PC-9 (cell line): ENCODE measurements at regions of chr20 and their contacts with region 1.

Region 1: GRCh38 chr20:43749734-43750294 is 23.0 kb upstream of the GTSF1L start:
- DNase-seq: peak in 1 of 2 experiments; percentile 87
- H3K4me3 ChIP-seq: peak overlapping the region; percentile 13; the same call in 1 of the 2 replicates
- H3K27ac ChIP-seq: no peak overlapping the region
- H3K4me1 ChIP-seq: peaks cover 62% of the 10 kb centered on the region
- H3K27me3 ChIP-seq: no peaks in the 10 kb centered on the region
- CTCF ChIP-seq: peak; percentile 100

Region 2: GRCh38 chr20:43456809-43457639 is 292.8 kb before region 1 on chr20:
- CTCF ChIA-PET with region 1: no interaction called
- POLR2A ChIA-PET with region 1: no interaction called
- intact Hi-C with region 1: loop called (anchors 2 kb)
- DNase-seq: peak; percentile 80 to 86
- H3K4me3 ChIP-seq: peak overlapping the region; percentile 100
- H3K27ac ChIP-seq: peak overlapping the region; percentile 99
- H3K4me1 ChIP-seq: peaks cover 14% of the 10 kb centered on the region
- H3K27me3 ChIP-seq: peaks cover 7% of the 10 kb centered on the region
- CTCF ChIP-seq: no peak

Region 3: DNA sequence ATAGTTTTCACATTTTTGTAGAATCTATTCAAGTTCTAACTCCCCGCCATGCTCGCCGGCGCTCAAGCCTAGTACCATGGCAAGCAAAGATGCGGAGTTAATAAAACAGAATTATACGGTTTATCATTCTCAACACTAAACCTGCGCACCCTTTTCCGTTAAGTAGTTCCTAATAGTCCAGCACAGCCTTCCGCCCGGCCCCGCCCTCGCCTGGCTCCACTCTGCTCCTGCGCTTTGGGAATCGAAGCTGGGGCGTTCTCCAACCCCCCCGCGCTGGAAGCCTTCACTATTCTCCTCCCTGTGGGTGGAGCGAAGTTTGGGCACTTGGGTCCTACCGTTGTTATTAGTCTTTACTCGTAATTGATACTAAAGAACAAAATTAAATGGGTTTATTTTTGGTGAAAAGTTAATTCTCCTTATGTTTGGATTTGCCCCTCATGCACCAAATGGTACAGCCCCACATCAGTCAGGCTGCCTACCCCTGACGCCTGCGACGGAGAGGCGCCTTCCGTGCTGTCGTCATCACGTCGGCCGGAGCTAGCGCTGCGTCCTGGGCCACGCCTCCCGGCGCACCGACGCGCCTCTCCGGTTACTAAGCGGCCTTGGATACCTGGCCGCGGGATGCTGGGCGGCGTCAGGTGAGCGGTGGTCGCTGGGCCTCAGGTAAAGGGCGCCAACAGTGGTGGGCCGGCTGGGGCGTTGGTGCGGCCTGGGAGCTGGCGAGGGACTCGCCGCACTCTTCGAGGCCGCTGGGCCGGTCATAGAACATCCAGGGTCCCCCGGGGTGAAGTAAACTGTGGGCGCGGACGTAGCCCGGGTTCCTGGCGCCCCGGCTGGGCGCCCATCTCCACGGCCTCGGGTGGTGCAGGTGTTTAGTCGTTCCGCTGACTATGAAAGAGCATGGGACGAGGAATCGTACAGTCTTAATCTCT is 159.2 kb before region 1 on chr20 and contains the start of gene IFT52:
- CTCF ChIA-PET with region 1: no interaction called
- POLR2A ChIA-PET with region 1: no interaction called
- intact Hi-C with region 1: no loop called
- DNase-seq: peak; percentile 87 to 93
- H3K4me3 ChIP-seq: peak within 1 kb of the TSS; percentile 81
- H3K27ac ChIP-seq: peak within 1 kb of the TSS; percentile 44
- H3K4me1 ChIP-seq: peaks cover 19% of the 10 kb centered on the region
- H3K27me3 ChIP-seq: no peaks in the 10 kb centered on the region
- CTCF ChIP-seq: no peak
- total RNA-seq, gene IFT52: 43.2 and 46.4 TPM in 2 replicates

Region 4: DNA sequence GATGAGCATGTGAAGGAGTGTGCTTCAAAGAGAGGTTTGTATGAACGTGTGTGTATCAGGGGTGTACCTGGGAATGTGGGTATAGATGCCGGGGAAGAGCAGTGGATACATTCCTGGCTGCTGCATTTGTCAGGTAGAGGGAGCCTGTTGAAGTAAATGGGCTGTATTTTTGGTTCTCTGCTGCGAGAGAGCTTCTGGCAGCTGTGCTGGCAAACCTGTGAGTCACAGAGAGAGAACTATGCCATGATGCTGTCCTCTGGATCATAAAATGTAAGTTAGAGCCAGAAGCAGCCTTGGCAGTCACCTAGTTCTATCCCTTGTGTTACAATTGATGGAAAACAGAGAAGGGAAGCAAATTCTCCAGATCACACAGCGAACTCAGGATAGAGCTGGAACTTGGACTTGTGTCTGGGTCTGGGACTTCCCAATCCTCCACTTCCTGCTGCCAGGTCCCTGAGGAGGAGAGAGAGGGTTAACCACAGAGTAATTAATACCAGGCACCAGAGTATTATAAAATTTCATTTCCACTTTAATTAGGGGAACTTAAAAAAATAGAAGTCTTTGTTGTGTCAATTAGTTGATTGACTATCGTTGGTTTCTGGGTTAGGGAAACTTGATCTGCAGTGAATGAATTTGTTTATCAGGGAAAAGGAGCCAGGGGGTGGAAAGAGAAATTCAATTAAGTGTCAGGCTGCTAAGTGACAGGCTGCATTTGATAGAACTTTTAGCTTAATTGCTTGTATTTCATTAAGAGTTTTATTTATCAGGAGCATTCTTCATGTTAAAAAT is 18.1 kb after region 1 on chr20:
- CTCF ChIA-PET with region 1: no interaction called
- POLR2A ChIA-PET with region 1: interaction called, 15 read pairs
- intact Hi-C with region 1: no loop called
- DNase-seq: peak in 1 of 2 experiments; percentile 25
- H3K4me3 ChIP-seq: no peak overlapping the region
- H3K27ac ChIP-seq: no peak overlapping the region
- H3K4me1 ChIP-seq: peaks cover 5% of the 10 kb centered on the region; the same call in 1 of the 2 replicates
- H3K27me3 ChIP-seq: no peaks in the 10 kb centered on the region
- CTCF ChIP-seq: no peak

Region 5: DNA sequence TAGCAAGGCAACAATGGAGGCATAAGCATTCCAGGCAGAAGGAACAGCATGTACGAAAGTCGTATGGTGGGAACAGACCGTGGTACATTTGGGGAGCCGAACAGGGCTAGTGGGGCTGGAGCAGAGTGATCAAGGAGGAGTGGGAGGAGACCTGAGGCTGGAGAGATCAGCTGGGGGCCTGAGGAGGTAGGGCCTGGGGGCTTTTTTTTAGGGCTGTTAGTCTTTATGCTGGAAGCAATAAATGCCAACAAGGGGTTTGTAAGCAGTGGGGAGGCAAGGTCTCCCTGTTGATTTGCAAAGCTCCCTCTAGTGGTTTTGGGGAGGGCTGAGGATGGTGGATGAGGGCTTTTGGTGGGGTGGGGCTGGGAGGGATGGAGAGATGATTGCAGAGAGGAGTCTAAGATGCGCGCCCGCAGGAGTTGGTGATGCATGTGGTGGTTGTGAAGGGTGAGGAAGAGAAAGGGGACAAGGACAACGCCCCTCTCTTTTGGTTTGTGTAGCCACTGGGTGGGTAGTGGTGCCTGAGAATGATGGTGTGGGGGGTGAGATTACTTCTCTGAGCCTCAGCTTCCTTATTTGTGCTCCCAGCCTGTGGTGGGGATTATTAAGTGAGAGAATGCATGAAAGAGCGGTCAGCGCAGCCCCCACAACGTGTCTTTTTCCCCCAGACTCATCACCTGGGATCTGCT is 90.7 kb after region 1 on chr20:
- CTCF ChIA-PET with region 1: interaction called, 6 read pairs
- POLR2A ChIA-PET with region 1: interaction called, 18 read pairs
- intact Hi-C with region 1: loop called (anchors 1 kb)
- DNase-seq: peak in 1 of 2 experiments; percentile 15
- H3K4me3 ChIP-seq: no peak overlapping the region
- H3K27ac ChIP-seq: no peak overlapping the region
- H3K4me1 ChIP-seq: peaks cover 39% of the 10 kb centered on the region
- H3K27me3 ChIP-seq: no peaks in the 10 kb centered on the region
- CTCF ChIP-seq: peak; percentile 66

Region 6: GRCh38 chr20:43955062-43955749 is 205.4 kb after region 1 on chr20:
- CTCF ChIA-PET with region 1: interaction called, 9 read pairs
- POLR2A ChIA-PET with region 1: no interaction called
- intact Hi-C with region 1: loop called (anchors 1 kb)
- DNase-seq: peak; percentile 80 to 99
- H3K4me3 ChIP-seq: peak overlapping the region; percentile 22; the same call in 1 of the 2 replicates
- H3K27ac ChIP-seq: peak overlapping the region; percentile 97
- H3K4me1 ChIP-seq: peaks cover 77% of the 10 kb centered on the region
- H3K27me3 ChIP-seq: no peaks in the 10 kb centered on the region
- CTCF ChIP-seq: no peak

Region 7: GRCh38 chr20:44196271-44196670 is 446.5 kb after region 1 on chr20:
- CTCF ChIA-PET with region 1: interaction called, 15 read pairs
- POLR2A ChIA-PET with region 1: no interaction called
- intact Hi-C with region 1: no loop called
- DNase-seq: no peak
- H3K4me3 ChIP-seq: no peak overlapping the region
- H3K27ac ChIP-seq: no peak overlapping the region
- H3K4me1 ChIP-seq: peaks cover 8% of the 10 kb centered on the region; the same call in 1 of the 2 replicates
- H3K27me3 ChIP-seq: no peaks in the 10 kb centered on the region
- CTCF ChIP-seq: 0 out of 2 replicates have a peak, but pooled peaks have one; percentile 31

Region 8: DNA sequence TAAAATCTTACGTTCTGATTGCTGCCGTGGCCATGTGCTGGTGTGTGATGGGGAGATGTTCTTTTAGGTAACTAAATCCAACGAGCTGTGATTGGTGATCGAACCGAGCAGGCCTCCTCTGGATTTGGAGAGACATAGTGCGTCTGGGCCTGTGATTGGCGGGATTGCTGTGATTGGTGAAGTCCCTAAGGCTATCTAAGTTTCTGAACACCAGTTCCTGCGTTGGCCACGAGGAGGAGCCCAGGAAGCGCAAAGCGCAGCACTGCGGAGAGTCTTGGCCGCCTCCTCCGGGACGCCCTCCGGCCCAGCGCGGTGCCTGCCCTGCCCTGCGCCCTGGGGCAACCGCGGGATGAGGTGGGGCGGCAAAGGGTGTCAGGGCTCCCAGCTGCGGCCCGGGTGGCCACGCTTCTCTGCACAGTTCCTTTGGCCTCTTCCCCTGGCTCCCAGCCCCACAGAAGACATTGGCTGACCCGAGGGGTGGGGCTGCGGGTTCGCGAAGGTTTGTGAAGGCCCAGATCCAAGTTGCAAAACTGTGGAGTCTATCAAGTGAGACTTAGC is 638.7 kb after region 1 on chr20:
- CTCF ChIA-PET with region 1: no interaction called
- POLR2A ChIA-PET with region 1: no interaction called
- intact Hi-C with region 1: loop called (anchors 2 kb)
- DNase-seq: peak; percentile 68 to 73
- H3K4me3 ChIP-seq: no peak overlapping the region
- H3K27ac ChIP-seq: no peak overlapping the region
- H3K4me1 ChIP-seq: no peaks in the 10 kb centered on the region; the same call in 1 of the 2 replicates
- H3K27me3 ChIP-seq: no peaks in the 10 kb centered on the region
- CTCF ChIP-seq: peak; percentile 95